ENCODE measurements at regions of chr1 and their contacts with region 1.

Region 1: GRCh38 chr1:166975361-166976129 is at the start of gene ILDR2:
- DNase-seq: peak; percentile 73
- ATAC-seq: peak; percentile 82
- total RNA-seq, gene ILDR2: 1.8 TPM

Region 2: DNA sequence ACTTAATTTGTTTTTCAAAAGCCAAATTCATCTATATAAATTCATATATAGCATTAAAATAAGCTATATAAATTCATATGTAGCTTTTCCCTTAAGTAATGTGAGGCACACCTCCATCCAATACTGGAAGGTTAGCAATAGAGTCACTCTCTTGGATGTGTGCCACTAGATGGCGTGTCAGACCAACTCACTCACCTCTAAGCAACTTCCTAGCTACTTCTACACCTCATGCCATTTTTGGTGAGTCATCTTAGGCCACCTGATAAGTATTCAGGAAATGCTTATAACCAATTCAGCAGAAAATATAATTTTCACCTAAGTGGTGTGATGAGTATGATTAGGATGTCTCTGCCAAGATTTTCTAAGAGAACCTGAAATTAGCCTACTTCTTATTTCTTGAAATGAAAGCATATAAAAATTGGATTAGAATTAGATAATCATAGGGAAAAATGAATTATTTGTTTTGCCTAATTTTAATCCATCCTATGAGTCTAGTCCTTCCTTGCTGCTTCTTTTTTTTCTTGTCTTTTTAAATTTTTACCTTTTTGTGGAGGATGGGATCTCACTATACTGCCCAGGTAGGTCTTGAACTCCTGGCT is 65.0 kb before region 1 on chr1:
- intact Hi-C with region 1: loop called (anchors 5 kb)
- DNase-seq: no peak
- ATAC-seq: peak; percentile 84

Region 3: GRCh38 chr1:167022384-167022783 is 46.8 kb after region 1 on chr1:
- intact Hi-C with region 1: no loop called
- DNase-seq: no peak
- ATAC-seq: no peak

Measured in Right ventricle myocardium inferior (tissue), 1 donor.